PC-9 (cell line): ENCODE measurements at regions of chr21 and their contacts with region 1.

Region 1: GRCh38 chr21:41535819-41536640 is 28.1 kb upstream of the TMPRSS2 start:
- DNase-seq: peak; percentile 87 to 91
- H3K4me3 ChIP-seq: peak overlapping the region; percentile 48; the same call in 1 of the 2 replicates
- H3K27ac ChIP-seq: peak overlapping the region; percentile 70
- H3K4me1 ChIP-seq: peaks cover 28% of the 10 kb centered on the region
- H3K27me3 ChIP-seq: no peaks in the 10 kb centered on the region
- CTCF ChIP-seq: no peak

Region 2: GRCh38 chr21:41477641-41478318 is 58.2 kb before region 1 on chr21:
- CTCF ChIA-PET with region 1: no interaction called
- POLR2A ChIA-PET with region 1: no interaction called
- intact Hi-C with region 1: loop called (anchors 5 kb)
- DNase-seq: peak; percentile 40 to 49
- H3K4me3 ChIP-seq: no peak overlapping the region
- H3K27ac ChIP-seq: peak overlapping the region; percentile 23; the same call in 1 of the 2 replicates
- H3K4me1 ChIP-seq: peaks cover 11% of the 10 kb centered on the region
- H3K27me3 ChIP-seq: no peaks in the 10 kb centered on the region
- CTCF ChIP-seq: no peak

Region 3: DNA sequence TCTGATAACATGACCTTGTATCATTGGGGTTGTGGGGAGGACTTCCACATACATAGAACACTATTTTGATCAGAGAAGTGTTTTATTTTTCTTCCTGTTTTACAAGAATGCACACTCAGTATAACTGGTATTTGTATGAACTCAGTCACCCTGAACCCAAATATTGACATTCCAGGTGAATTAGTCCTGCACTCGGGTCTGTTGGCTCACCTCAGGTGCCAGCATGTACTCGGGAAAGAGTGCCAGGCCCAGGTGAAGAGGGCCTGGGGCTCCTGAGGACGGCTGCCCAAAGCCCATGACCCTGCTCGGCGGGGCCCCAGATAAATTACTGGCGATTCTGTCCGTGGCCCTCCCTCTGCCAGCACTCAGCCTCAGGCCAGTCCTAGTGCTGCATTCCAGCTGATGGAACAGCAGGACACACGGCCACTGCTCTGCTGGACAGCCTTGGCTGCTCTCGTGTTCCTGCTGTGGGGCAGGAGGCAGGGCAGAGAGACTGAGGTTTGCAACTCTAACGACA is 47.3 kb after region 1 on chr21:
- CTCF ChIA-PET with region 1: no interaction called
- POLR2A ChIA-PET with region 1: no interaction called
- intact Hi-C with region 1: loop called (anchors 1 kb)
- DNase-seq: peak; percentile 77 to 93
- H3K4me3 ChIP-seq: no peak overlapping the region
- H3K27ac ChIP-seq: peak overlapping the region; percentile 67
- H3K4me1 ChIP-seq: peaks cover 55% of the 10 kb centered on the region
- H3K27me3 ChIP-seq: no peaks in the 10 kb centered on the region
- CTCF ChIP-seq: no peak

Region 4: GRCh38 chr21:42135386-42136052 is 599.5 kb after region 1 on chr21:
- CTCF ChIA-PET with region 1: no interaction called
- POLR2A ChIA-PET with region 1: no interaction called
- intact Hi-C with region 1: no loop called
- DNase-seq: no peak
- H3K4me3 ChIP-seq: no peak overlapping the region
- H3K27ac ChIP-seq: no peak overlapping the region
- H3K4me1 ChIP-seq: no peaks in the 10 kb centered on the region
- H3K27me3 ChIP-seq: no peaks in the 10 kb centered on the region
- CTCF ChIP-seq: no peak